Tibial artery (tissue), 4 donors: ENCODE measurements at regions of chr1 and their contacts with region 1.

Region 1: GRCh38 chr1:156338180-156338973 is at the starts of genes CCT3 and TSACC:
- DNase-seq: peak; percentile 99 to 100
- H3K4me3 ChIP-seq: peak within 1 kb of the TSS; percentile 68 to 70
- H3K27ac ChIP-seq: peak within 1 kb of the TSS; percentile 68 to 72
- H3K4me1 ChIP-seq: peaks cover 5 to 24% (median 14%) of the 10 kb centered on the region in 4 donors
- H3K27me3 ChIP-seq: no peaks in the 10 kb centered on the region
- CTCF ChIP-seq: peak in 1 of 2 experiments; percentile 11

Region 2: DNA sequence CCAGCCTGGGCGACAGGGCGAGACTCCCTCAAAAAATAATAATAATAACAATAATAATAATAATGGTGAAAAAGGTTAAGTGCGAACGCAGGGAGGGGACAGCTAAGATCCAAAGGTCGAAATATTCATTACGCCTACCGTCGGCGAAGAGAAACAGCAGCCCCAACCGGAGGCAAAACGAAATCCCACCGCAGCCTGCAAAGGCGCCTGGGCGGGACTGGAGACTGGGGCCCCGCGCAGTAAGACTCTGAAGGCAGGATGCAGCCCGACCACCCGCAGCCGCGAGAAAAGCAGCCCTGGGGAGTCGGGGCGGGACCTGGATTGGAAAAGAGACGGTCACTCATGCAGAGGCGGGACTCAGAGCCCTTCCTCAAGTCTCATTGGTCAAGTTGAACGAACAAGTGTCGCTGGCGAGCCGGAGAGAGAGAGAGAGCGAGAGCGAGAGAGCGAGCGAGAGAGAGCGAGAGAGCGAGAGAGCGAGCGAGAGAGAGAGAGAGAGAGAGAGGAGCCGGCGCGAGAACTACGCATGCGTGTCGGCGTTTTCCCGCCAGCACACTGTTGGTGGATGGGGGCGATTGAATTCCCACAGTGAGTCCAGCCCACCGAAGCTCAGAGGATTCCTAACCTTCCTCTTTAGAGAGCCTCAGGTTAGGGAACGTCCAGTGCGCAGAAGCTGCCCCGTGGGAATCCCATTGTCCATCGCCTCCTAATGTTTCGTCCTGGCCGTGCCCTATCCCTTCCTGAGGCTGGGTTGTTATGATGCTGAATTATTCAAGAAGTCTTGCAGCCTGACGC is 1093.8 kb before region 1 on chr1:
- intact Hi-C with region 1: no loop called
- DNase-seq: peak; percentile 99
- H3K4me3 ChIP-seq: peak overlapping the region; percentile 59 to 83
- H3K27ac ChIP-seq: peak overlapping the region; percentile 94 to 96
- H3K4me1 ChIP-seq: peaks cover 0 to 44% (median 26%) of the 10 kb centered on the region in 4 donors
- H3K27me3 ChIP-seq: no peaks in the 10 kb centered on the region
- CTCF ChIP-seq: peak; percentile 14 to 98

Region 3: GRCh38 chr1:156146020-156146768 is 192.2 kb before region 1 on chr1:
- intact Hi-C with region 1: no loop called
- DNase-seq: peak; percentile 76 to 85
- H3K4me3 ChIP-seq: no peak overlapping the region
- H3K27ac ChIP-seq: peak overlapping the region; percentile 31 to 33
- H3K4me1 ChIP-seq: peaks cover 0 to 69% (median 27%) of the 10 kb centered on the region in 4 donors
- H3K27me3 ChIP-seq: peaks cover 0 to 9% of the 10 kb centered on the region in 2 donors
- CTCF ChIP-seq: peak; percentile 61 to 70

Region 4: DNA sequence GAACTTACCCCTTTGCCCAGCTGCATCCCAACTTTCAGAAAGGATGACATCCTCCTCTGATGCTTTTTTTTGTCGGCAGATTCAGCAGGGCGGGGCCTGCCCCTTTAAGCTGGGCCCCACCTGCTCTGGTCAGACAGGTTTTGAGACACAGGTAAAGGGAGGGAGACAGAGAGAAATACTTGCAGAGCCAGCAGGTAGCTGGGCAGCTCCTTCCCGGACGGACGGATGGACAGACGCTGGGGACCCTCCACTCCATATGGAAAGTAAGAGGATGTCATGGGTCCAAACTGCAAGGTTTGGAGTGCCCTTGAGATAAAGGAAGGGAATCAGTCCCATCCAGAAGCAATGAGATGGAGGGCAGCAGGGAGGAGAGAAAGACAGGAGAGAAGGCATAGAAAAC is 54.2 kb before region 1 on chr1 and contains the start of gene TMEM79:
- intact Hi-C with region 1: loop called (anchors 2 kb)
- DNase-seq: no peak
- H3K4me3 ChIP-seq: peak within 1 kb of the TSS; percentile 77 to 94
- H3K27ac ChIP-seq: peak within 1 kb of the TSS; percentile 84 to 90
- H3K4me1 ChIP-seq: peaks cover 0 to 52% (median 22%) of the 10 kb centered on the region in 4 donors
- H3K27me3 ChIP-seq: no peaks in the 10 kb centered on the region
- CTCF ChIP-seq: no peak

Region 5: DNA sequence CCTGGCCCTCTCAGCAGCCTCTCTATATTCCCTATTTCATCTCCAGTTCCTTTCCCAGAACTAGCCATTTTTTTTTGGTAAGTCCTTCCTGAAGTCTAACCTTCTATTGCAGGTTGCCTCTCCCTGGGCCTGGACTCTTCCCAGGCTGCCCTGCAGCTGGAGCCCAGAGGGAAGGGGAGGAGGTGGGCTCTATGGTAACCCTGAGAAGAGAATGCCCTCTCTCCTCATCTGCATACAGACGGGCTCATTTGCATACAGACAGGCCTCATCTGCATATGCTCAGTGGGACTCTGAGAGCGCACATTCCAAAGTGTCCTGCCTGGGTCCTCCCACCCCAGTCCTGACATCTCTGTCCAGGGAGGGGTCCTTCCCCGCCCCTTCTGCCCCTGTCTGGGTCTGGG is 63.3 kb after region 1 on chr1:
- intact Hi-C with region 1: no loop called
- DNase-seq: no peak
- H3K4me3 ChIP-seq: no peak overlapping the region
- H3K27ac ChIP-seq: no peak overlapping the region
- H3K4me1 ChIP-seq: no peaks in the 10 kb centered on the region
- H3K27me3 ChIP-seq: peaks cover 0 to 71% of the 10 kb centered on the region in 2 donors
- CTCF ChIP-seq: no peak